ENCODE measurements at regions of chr1 and their contacts with region 1.

Region 1: DNA sequence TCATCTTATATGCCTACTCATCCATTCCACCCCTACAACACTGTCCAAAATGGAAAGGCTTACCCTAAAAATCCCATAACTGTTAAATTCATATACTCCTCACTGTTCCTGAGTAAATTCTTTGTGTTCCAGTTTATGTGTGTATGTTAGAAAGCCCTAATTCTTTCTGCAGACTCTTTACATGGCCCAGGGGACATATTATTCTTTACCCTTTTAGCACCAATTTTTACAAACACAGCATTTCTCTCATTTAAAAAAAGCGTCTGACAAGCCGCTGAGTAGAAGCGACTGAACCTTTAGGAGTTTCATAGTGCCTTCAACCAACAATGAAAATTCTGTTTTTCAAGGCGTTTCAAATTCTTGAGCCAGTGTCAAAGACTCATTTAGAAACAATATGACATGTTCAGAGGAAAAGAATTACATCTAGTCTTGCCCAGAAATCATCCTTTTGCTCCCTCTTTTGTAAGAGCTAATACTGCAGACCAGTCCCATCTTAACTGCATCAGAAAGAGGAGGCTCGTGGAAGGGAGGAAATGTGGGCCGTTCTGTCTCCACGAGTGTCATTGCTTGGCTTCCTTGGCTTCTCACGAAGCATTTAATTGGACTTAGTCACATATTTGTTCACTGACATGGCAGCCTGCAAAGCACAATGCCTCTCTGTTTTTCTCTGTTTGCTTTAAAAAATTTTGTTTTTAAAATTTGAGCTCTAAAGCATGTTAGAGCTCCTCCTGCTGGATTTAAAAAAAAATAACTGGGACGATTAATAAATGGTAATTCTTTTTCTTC is 21.3 kb upstream of the C1orf105 start:
- DNase-seq: peak; percentile 37
- H3K4me3 ChIP-seq: peak overlapping the region in 1 of 4 donors; percentile 25
- H3K27ac ChIP-seq: peak overlapping the region; percentile 52 to 74 (median 70)
- H3K4me1 ChIP-seq: peaks cover 16 to 47% (median 32%) of the 10 kb centered on the region in 4 donors
- H3K27me3 ChIP-seq: no peaks in the 10 kb centered on the region
- CTCF ChIP-seq: peak; percentile 63 to 84 (median 74)
- EP300 ChIP-seq: no peak
- POLR2A ChIP-seq: no peak

Region 2: DNA sequence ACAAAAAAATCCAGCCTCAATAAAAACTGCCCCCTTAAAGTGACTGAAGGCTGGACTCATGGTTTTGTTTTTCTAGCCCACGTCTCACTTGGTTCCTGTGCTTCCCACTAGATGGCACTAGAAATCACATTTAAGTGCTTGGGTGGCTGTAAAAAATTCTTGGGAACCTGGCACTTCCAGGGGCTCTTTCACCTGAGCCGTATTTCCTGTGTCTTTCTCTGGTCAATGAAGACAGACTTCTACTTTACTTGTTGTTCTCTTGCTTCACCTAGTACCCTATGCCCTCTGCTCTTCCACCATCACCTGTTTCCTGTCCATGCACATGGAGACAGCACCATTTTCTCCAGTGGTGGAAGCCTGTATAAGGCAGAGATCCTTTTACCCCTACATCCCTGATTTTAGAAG is 597.7 kb before region 1 on chr1:
- in situ Hi-C with region 1: loop called in 2 of 4 experiments (anchors 25 kb)
- intact Hi-C with region 1: no loop called
- DNase-seq: no peak
- H3K4me3 ChIP-seq: no peak overlapping the region
- H3K27ac ChIP-seq: no peak overlapping the region
- H3K4me1 ChIP-seq: no peaks in the 10 kb centered on the region
- H3K27me3 ChIP-seq: no peaks in the 10 kb centered on the region
- CTCF ChIP-seq: peak; percentile 66 to 75 (median 70)
- EP300 ChIP-seq: no peak
- POLR2A ChIP-seq: no peak

Region 3: GRCh38 chr1:172002725-172003345 is 396.3 kb before region 1 on chr1:
- in situ Hi-C with region 1: loop called in 2 of 4 experiments (anchors 25 kb)
- intact Hi-C with region 1: no loop called
- DNase-seq: peak; percentile 14
- H3K4me3 ChIP-seq: no peak overlapping the region
- H3K27ac ChIP-seq: no peak overlapping the region
- H3K4me1 ChIP-seq: peaks cover 0 to 4% (median 0%) of the 10 kb centered on the region in 4 donors
- H3K27me3 ChIP-seq: no peaks in the 10 kb centered on the region
- CTCF ChIP-seq: peak; percentile 53 to 62 (median 58)
- EP300 ChIP-seq: no peak
- POLR2A ChIP-seq: no peak

Region 4: DNA sequence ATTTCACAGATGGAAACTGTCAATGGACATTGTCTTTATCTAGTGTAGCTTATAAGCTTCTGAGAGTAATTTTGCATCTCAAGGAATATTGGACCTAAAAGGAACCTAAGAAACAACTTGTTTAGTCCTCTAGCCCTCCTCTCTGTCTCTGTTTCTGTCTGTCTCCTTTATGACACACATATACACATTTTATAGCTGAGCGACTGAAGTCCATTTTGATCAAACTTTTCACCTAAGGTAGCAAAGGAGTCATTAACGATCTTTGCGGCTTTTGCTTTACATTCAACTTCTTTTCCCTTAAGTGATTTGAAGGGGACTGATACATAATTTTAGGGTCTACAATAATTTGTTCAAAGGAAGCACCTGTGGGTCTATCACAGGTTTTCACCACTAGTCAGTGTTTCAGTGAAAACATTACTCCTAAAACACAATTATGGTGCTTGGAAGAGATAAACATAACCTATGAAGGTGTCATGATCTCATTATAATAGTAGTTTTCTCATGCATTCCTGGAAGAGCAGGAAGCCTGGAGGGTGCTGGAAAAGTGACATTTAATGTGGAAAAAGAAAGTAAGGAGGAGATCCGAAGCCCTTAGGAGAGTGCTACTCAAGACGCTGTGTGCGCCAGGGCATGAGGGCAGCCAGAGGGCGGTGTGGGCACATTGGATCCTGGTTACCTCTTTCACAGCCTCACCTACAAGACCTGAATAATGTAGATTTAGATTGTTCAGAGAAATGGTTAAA is 309.2 kb before region 1 on chr1:
- in situ Hi-C with region 1: loop called in 2 of 4 experiments (anchors 25 kb)
- intact Hi-C with region 1: no loop called
- DNase-seq: peak; percentile 80
- H3K4me3 ChIP-seq: peak overlapping the region in 2 of 4 donors; percentile 2 to 24
- H3K27ac ChIP-seq: peak overlapping the region in 3 of 4 donors; percentile 27 to 30 (median 27)
- H3K4me1 ChIP-seq: peaks cover 0 to 4% (median 0%) of the 10 kb centered on the region in 4 donors
- H3K27me3 ChIP-seq: no peaks in the 10 kb centered on the region
- CTCF ChIP-seq: peak; percentile 70 to 90 (median 79)
- EP300 ChIP-seq: no peak
- POLR2A ChIP-seq: no peak

Region 5: DNA sequence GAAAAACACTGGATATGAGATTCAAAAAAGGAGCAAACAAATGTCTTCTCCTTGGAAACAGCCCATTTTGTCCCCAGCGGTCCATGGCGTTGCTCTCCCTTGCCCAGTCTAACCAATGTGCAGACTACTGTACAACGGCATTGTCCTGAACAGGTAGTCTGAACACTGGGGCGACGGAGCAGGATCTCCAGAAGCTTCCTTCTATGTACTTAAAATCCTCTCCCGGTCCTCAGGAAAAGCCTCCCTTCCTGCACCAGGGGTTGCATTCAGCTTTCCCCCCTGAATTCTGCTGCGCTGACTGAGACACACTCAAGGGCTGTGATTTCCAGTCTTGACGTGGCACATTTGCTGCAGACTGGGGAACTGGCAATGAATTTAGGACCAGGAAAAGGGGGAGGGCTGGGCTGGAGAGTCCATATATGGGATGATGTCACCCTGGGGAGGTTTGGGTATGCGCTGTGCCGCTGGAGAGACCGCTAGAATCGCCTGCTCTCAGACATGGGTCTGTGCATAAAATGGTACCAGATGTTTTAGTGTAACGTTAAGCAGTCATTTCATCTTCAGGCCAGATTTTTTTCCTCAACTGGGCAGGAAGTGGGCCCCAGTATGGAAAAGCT is 254.6 kb before region 1 on chr1:
- in situ Hi-C with region 1: no loop called
- intact Hi-C with region 1: loop called (anchors 5 kb)
- DNase-seq: peak; percentile 61
- H3K4me3 ChIP-seq: peak overlapping the region; percentile 27 to 43 (median 40)
- H3K27ac ChIP-seq: peak overlapping the region; percentile 82 to 88 (median 84)
- H3K4me1 ChIP-seq: peaks cover 0 to 14% (median 3%) of the 10 kb centered on the region in 4 donors
- H3K27me3 ChIP-seq: no peaks in the 10 kb centered on the region
- CTCF ChIP-seq: no peak
- EP300 ChIP-seq: no peak
- POLR2A ChIP-seq: peak; percentile 67

Region 6: DNA sequence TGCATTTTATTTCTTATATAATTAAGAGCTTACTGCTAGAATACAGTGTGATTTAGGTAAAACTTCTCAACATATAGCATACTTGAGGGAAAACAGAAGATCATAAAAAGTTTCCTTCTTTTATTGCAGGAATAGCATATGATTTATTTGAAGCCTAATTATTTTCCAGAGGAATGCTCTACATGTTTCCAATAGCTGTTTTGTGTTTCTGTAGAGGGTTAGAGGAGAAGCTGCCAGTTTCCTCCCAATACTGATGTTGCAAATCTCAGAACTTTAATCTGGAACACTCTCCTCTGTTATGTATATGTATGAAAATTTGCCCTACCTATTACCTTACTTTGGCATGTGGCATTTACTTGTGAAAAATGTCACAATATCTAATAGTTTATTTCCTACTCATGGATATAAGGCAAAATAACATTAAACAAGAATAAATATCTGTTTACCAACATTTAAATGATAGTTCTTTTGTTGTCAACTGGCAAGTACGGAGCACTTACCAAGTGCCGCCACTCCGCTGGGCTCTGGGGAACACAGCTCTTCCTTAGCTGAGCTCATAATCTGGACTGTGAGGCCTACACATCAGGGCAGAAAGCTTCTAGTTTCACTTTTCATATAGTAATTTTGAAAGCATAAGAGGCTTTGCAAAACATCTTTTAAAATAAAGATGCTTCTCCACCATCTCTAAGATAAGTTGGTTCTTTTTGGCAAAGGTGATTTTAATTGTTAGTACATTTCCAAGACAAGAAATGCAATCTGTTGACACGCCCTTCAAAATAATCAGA is 218.5 kb before region 1 on chr1:
- in situ Hi-C with region 1: loop called in 1 of 4 experiments (anchors 25 kb)
- intact Hi-C with region 1: no loop called
- DNase-seq: peak; percentile 50
- H3K4me3 ChIP-seq: peak overlapping the region in 1 of 4 donors; percentile 31
- H3K27ac ChIP-seq: peak overlapping the region; percentile 77 to 84 (median 78)
- H3K4me1 ChIP-seq: peaks cover 3 to 47% (median 18%) of the 10 kb centered on the region in 4 donors
- H3K27me3 ChIP-seq: no peaks in the 10 kb centered on the region
- CTCF ChIP-seq: no peak
- EP300 ChIP-seq: no peak
- POLR2A ChIP-seq: no peak

Region 7: GRCh38 chr1:172293429-172293828 is 105.7 kb before region 1 on chr1:
- in situ Hi-C with region 1: no loop called
- intact Hi-C with region 1: no loop called
- DNase-seq: no peak
- H3K4me3 ChIP-seq: no peak overlapping the region
- H3K27ac ChIP-seq: no peak overlapping the region
- H3K4me1 ChIP-seq: no peaks in the 10 kb centered on the region
- H3K27me3 ChIP-seq: no peaks in the 10 kb centered on the region
- CTCF ChIP-seq: no peak
- EP300 ChIP-seq: no peak
- POLR2A ChIP-seq: no peak

Region 8: DNA sequence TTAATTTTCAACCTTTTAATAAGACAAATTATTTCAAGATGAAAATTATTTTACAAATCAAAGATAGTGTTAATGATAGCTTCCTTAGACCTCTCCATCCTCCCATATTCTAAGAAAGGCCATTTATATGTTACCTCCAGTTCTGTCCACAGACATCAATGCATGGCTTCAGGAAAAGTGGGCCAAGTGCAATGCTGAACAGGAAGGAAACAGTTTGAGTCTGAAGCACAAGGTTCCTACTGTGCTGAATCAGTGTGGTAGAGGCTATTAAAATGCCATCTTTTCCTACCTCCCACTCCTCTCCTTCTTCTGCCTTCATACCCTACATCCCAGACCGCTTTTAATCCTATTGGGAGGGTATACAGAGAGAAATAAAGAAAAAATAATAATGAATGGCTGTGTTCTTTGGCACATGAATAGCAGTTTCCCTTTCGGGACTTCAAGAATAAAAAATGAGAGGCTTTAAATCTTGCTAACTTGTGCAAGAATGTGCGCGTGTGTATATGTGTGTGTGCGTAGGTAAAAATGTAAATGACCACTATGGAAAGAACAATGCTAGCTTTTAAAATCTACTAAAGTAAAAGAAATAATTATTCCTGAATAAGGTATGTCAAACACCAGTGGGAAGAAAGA is 41.3 kb before region 1 on chr1:
- in situ Hi-C with region 1: no loop called
- intact Hi-C with region 1: loop called (anchors 2 kb)
- DNase-seq: no peak
- H3K4me3 ChIP-seq: peak overlapping the region in 1 of 4 donors; percentile 26
- H3K27ac ChIP-seq: peak overlapping the region; percentile 82 to 91 (median 90)
- H3K4me1 ChIP-seq: peaks cover 40 to 72% (median 53%) of the 10 kb centered on the region in 4 donors
- H3K27me3 ChIP-seq: no peaks in the 10 kb centered on the region
- CTCF ChIP-seq: no peak
- EP300 ChIP-seq: no peak
- POLR2A ChIP-seq: no peak

Measured in transverse colon (tissue), 4 donors.